Activated CD8-positive, alpha-beta T cell treated with anti-CD3 and anti-CD28 coated beads, Interleukin-2, amount 10 ng/mL, durations not matched to agents 7 days and 5 days (primary cell): ENCODE measurements at regions of chr3 and their contacts with region 1.

Region 1: DNA sequence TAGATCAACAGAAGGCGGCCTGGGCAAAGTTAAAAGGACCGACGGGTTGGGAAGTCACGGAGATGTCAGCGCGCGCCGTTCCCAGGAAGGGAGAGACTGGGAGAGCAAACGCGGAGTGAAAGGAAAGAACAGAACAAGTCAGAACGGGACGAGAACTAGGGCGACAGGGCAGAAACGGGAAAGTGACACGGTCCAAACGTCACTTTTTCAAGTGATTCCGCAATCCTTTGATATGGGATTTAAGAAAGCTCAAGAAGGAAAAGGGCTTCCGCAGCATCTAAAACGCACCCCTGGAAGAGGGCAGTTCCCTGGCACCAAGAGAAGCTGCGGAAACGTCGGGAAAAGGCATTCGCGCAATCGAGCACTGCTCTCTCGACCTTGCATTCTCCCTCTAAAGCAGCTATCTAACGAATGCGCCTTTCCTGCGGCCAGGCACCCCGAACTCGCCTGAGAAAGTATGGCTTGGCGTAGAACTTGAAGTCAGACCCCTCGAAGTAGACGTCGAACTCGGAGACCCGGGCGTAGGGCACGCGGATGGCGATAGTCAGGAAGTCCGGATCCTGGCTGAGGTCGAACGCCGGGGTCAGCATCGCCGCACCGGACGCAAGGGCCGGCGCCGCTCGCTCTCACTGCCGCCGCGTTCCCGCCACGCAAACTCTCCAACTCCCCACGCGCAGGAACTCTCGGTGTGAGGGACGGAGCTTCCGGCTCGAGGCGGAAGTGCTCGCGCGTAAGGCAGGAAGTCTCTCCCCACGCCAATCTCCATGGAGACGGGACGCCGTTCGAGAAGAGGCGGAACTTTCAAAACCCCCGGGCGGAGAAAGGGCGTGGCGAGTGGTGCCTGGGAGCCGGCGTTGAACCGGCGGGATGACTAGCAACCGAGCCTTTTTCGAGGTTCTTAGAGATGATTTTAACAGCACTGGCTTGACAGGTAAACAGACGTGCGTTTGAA is at the start of gene SHQ1:
- DNase-seq: peak; percentile 97
- ATAC-seq: peak; percentile 95
- H3K4me3 Mint-ChIP-seq: peak within 1 kb of the TSS; percentile 94
- H3K27ac Mint-ChIP-seq: peak within 1 kb of the TSS; percentile 84
- H3K4me1 Mint-ChIP-seq: peaks cover 49% of the 10 kb centered on the region
- H3K27me3 Mint-ChIP-seq: no peaks in the 10 kb centered on the region
- total RNA-seq, gene SHQ1: 27.2 to 28.0 TPM

Region 2: DNA sequence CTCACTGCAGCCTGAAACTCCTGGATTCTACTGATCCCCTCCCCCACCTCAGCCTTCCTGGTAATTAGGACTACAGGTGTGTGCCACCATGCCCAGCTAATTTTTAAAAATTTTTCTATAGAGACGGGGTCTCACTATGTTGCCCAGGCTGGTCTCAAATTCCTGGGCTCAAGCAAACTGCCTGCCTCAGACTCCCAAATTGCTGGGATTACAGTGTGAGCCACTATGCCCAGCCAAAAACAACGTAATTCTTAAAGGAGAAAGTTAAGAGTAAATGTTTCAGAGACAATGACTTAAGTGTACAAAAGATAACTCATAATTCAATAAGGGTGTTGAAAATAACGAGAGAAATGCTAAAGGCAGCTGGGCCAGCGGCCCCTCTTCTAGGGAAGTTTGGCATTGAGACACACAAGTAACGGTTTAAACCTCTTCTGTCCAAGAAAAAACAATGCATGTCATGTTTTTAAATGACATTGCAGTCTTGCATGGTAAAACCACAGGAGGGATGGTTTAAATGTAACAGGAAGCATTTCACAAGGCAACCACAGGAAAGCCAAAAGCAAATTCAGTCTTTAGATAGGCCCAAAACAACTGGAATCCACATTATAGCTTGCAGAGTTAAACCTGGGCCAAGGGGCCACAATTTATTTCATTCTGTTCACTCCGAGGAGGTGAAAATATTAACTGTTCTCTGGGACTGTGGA is 1068.2 kb before region 1 on chr3:
- CTCF ChIA-PET with region 1: no interaction called
- POLR2A ChIA-PET with region 1: no interaction called
- DNase-seq: no peak
- ATAC-seq: peak; percentile 32
- H3K4me3 Mint-ChIP-seq: peak overlapping the region; percentile 24
- H3K27ac Mint-ChIP-seq: no peak overlapping the region
- H3K4me1 Mint-ChIP-seq: peaks cover 23% of the 10 kb centered on the region
- H3K27me3 Mint-ChIP-seq: peaks cover 30% of the 10 kb centered on the region

Region 3: GRCh38 chr3:72665701-72666443 is 182.2 kb before region 1 on chr3:
- CTCF ChIA-PET with region 1: interaction called, 15 read pairs
- POLR2A ChIA-PET with region 1: no interaction called
- DNase-seq: peak; percentile 67
- ATAC-seq: peak; percentile 53
- H3K4me3 Mint-ChIP-seq: no peak overlapping the region
- H3K27ac Mint-ChIP-seq: no peak overlapping the region
- H3K4me1 Mint-ChIP-seq: no peaks in the 10 kb centered on the region
- H3K27me3 Mint-ChIP-seq: no peaks in the 10 kb centered on the region

Region 4: GRCh38 chr3:72860846-72861245 is 12.8 kb after region 1 on chr3:
- CTCF ChIA-PET with region 1: interaction called, 14 read pairs
- POLR2A ChIA-PET with region 1: no interaction called
- DNase-seq: no peak
- ATAC-seq: no peak
- H3K4me3 Mint-ChIP-seq: no peak overlapping the region
- H3K27ac Mint-ChIP-seq: no peak overlapping the region
- H3K4me1 Mint-ChIP-seq: no peaks in the 10 kb centered on the region
- H3K27me3 Mint-ChIP-seq: no peaks in the 10 kb centered on the region

Region 5: DNA sequence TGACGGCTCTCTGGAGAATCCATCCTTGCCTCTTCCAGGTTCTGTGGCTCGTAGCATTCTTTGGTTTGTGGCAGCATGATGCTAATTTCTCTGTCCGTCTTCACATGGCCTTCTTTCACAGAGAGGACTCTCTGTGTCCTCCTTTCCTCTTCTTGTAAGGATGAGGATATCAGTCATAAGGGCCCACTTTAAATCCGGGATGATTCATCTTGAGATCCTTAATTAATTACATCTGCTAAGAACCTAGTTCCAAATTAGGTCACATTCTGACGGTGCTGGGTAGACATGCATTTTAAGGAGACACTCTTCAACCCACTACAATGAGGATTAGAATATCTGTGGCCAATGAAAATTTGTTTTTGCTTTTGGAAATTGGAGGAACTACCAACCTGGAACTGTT is 24.2 kb after region 1 on chr3:
- CTCF ChIA-PET with region 1: interaction called, 10 read pairs
- POLR2A ChIA-PET with region 1: no interaction called
- DNase-seq: no peak
- ATAC-seq: no peak
- H3K4me3 Mint-ChIP-seq: no peak overlapping the region
- H3K27ac Mint-ChIP-seq: no peak overlapping the region
- H3K4me1 Mint-ChIP-seq: no peaks in the 10 kb centered on the region
- H3K27me3 Mint-ChIP-seq: peaks cover 11% of the 10 kb centered on the region

Region 6: GRCh38 chr3:73086071-73086494 is 238.1 kb after region 1 on chr3:
- CTCF ChIA-PET with region 1: interaction called, 47 read pairs
- POLR2A ChIA-PET with region 1: interaction called, 3 read pairs
- DNase-seq: peak; percentile 60
- ATAC-seq: peak; percentile 69
- H3K4me3 Mint-ChIP-seq: no peak overlapping the region
- H3K27ac Mint-ChIP-seq: no peak overlapping the region
- H3K4me1 Mint-ChIP-seq: peaks cover 8% of the 10 kb centered on the region
- H3K27me3 Mint-ChIP-seq: peaks cover 5% of the 10 kb centered on the region